GM12878 (cell line): ENCODE measurements at regions of chr7 and their contacts with region 1.

Region 1: GRCh38 chr7:992709-993607 is 10.0 kb downstream of the CYP2W1 start:
- DNase-seq: peak; percentile 72
- ATAC-seq: peak; percentile 97
- H3K4me3 ChIP-seq: no peak overlapping the region
- H3K27ac ChIP-seq: no peak overlapping the region
- H3K4me1 ChIP-seq: peaks cover 6% of the 10 kb centered on the region
- H3K27me3 ChIP-seq: no peaks in the 10 kb centered on the region
- CTCF ChIP-seq: peak; percentile 99 to 100 (median 100); a peak in 5 of 6 replicates
- EP300 ChIP-seq: no peak
- POLR2A ChIP-seq: peak; percentile 71
- RAD21 ChIP-seq: peak; percentile 98

Region 2: DNA sequence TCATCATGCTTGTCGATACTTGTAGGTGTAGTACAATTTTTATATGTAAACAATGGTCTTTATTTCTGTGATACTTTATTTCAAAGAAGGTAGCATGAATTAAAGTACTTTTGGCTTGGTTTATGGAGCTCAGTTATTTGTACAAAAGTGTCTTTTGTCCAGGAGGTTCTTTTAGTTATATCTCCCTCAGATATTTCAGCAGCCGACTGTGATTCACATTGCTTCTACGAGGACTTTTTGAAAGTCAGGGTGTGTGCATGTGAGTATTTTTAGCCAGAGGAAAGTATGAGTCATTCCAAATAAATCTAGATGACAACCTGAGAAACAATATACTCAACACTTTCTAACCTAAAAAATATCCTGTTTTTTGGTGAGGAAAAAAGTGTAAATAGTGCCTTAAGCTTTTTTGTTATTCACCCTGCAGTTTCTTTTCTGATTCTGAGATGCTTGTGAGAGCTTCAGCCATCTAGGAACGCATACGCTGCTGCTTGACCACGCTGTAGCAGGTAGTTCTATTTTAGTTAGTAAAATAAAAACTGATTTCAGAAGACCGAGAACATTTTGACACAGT is 161.3 kb before region 1 on chr7:
- CTCF ChIA-PET with region 1: no interaction called
- POLR2A ChIA-PET with region 1: no interaction called
- RAD21 ChIA-PET with region 1: no interaction called
- SMC1A ChIA-PET with region 1: no interaction called
- in situ Hi-C with region 1: no loop called
- intact Hi-C with region 1: no loop called
- DNase-seq: peak; percentile 64
- ATAC-seq: peak; percentile 87
- H3K4me3 ChIP-seq: peak overlapping the region; percentile 31
- H3K27ac ChIP-seq: peak overlapping the region; percentile 77
- H3K4me1 ChIP-seq: peaks cover 27% of the 10 kb centered on the region
- H3K27me3 ChIP-seq: no peaks in the 10 kb centered on the region
- CTCF ChIP-seq: no peak
- EP300 ChIP-seq: peak; percentile 57 to 82; a peak in 3 of 4 replicates
- POLR2A ChIP-seq: no peak
- RAD21 ChIP-seq: 0 out of 2 replicates have a peak, but pooled peaks have one; percentile 18

Region 3: DNA sequence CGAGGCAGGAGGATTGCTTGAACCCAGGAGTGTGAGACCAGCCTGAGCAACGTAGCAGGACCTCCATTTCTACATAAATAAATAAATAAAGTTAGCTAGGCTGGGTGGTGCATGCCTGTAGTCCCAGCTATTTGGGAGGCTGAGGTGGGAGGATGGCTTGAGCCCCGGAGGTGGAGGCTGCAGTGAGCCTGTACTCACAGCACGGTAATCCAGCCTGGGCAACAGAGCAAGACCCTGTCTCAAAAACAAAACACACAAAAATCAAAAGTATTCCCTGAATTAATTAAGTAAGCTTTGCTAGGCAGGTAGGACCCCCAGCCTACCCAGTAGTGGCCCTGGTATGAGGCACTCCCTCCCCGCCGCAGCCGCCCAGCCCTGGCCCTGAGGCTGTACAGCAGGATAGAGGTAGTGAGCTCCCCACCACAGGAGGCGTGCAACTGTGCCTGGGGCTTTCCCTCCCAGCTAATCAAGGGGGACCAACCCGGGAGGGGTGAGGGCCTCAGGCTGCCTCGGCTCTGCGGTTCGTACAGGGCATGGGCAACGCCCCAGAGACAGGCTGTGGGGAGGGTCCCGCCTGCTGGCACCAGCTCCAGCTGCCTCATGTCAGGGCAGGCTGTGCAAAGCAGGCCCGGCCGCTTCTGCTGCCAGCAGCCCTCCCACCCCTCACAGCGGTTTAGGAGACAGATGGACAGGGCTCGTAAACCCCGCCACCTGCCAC is 11.0 kb before region 1 on chr7:
- CTCF ChIA-PET with region 1: interaction called, 78 read pairs
- POLR2A ChIA-PET with region 1: interaction called, 14 read pairs
- RAD21 ChIA-PET with region 1: interaction called, 30 read pairs
- SMC1A ChIA-PET with region 1: interaction called, 21 read pairs
- in situ Hi-C with region 1: no loop called
- intact Hi-C with region 1: no loop called
- DNase-seq: no peak
- ATAC-seq: no peak
- H3K4me3 ChIP-seq: no peak overlapping the region
- H3K27ac ChIP-seq: no peak overlapping the region
- H3K4me1 ChIP-seq: no peaks in the 10 kb centered on the region
- H3K27me3 ChIP-seq: no peaks in the 10 kb centered on the region; a peak in 2 of 4 replicates
- CTCF ChIP-seq: no peak
- EP300 ChIP-seq: no peak
- POLR2A ChIP-seq: no peak
- RAD21 ChIP-seq: no peak

Region 4: GRCh38 chr7:1059200-1060091 is 66.5 kb after region 1 on chr7:
- CTCF ChIA-PET with region 1: interaction called, 280 read pairs
- POLR2A ChIA-PET with region 1: interaction called, 7 read pairs
- RAD21 ChIA-PET with region 1: interaction called, 196 read pairs
- SMC1A ChIA-PET with region 1: interaction called, 121 read pairs
- in situ Hi-C with region 1: loop called (anchors 5 kb)
- intact Hi-C with region 1: no loop called
- DNase-seq: peak; percentile 33
- ATAC-seq: peak; percentile 69
- H3K4me3 ChIP-seq: no peak overlapping the region
- H3K27ac ChIP-seq: no peak overlapping the region
- H3K4me1 ChIP-seq: peaks cover 33% of the 10 kb centered on the region
- H3K27me3 ChIP-seq: no peaks in the 10 kb centered on the region
- CTCF ChIP-seq: no peak
- EP300 ChIP-seq: no peak
- POLR2A ChIP-seq: no peak
- RAD21 ChIP-seq: no peak

Region 5: GRCh38 chr7:1086588-1087464 is 93.9 kb after region 1 on chr7:
- CTCF ChIA-PET with region 1: interaction called, 27 read pairs
- POLR2A ChIA-PET with region 1: interaction called, 3 read pairs
- RAD21 ChIA-PET with region 1: interaction called, 18 read pairs
- SMC1A ChIA-PET with region 1: interaction called, 28 read pairs
- in situ Hi-C with region 1: no loop called
- intact Hi-C with region 1: loop called (anchors 5 kb)
- DNase-seq: no peak
- ATAC-seq: peak; percentile 96
- H3K4me3 ChIP-seq: peak overlapping the region; percentile 43; the same call in 1 of the 2 replicates
- H3K27ac ChIP-seq: peak overlapping the region; percentile 76
- H3K4me1 ChIP-seq: peaks cover 12% of the 10 kb centered on the region
- H3K27me3 ChIP-seq: no peaks in the 10 kb centered on the region
- CTCF ChIP-seq: peak; percentile 73 to 81 (median 78)
- EP300 ChIP-seq: peak; percentile 64 to 72
- POLR2A ChIP-seq: peak; percentile 70
- RAD21 ChIP-seq: peak; percentile 57; the same call in 1 of the 2 replicates

Region 6: DNA sequence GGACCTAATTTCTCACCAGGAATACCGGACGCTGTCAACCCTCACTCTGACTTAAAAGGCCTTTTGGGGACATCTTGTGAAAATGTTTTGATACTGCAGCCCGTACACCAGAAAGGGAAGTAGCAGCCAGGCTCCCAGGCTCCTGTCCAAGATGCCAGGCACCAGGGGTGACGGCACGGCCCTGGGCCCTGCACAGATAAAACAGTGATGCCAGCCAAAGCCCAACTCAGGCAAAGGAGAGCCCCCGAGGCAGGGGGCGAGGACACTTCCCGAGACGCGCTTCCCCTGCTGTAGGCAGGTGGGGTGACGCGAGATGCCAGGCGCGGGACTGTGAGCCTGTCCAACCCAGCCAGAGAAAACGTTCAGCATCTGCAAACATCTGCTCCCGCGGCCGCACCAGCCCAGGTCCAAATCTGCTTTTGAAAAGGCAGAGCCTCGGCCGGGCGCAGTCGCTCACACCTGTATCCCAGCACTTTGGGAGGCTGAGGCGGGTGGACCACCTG is 151.4 kb after region 1 on chr7:
- CTCF ChIA-PET with region 1: interaction called, 39 read pairs
- POLR2A ChIA-PET with region 1: interaction called, 5 read pairs
- RAD21 ChIA-PET with region 1: interaction called, 21 read pairs
- SMC1A ChIA-PET with region 1: interaction called, 8 read pairs
- in situ Hi-C with region 1: no loop called
- intact Hi-C with region 1: no loop called
- DNase-seq: no peak
- ATAC-seq: peak; percentile 62
- H3K4me3 ChIP-seq: no peak overlapping the region
- H3K27ac ChIP-seq: no peak overlapping the region
- H3K4me1 ChIP-seq: no peaks in the 10 kb centered on the region; the same call in 1 of the 2 replicates
- H3K27me3 ChIP-seq: no peaks in the 10 kb centered on the region
- CTCF ChIP-seq: peak; percentile 15 to 53 (median 49); a peak in 5 of 6 replicates
- EP300 ChIP-seq: no peak
- POLR2A ChIP-seq: no peak
- RAD21 ChIP-seq: peak; percentile 73

Region 7: DNA sequence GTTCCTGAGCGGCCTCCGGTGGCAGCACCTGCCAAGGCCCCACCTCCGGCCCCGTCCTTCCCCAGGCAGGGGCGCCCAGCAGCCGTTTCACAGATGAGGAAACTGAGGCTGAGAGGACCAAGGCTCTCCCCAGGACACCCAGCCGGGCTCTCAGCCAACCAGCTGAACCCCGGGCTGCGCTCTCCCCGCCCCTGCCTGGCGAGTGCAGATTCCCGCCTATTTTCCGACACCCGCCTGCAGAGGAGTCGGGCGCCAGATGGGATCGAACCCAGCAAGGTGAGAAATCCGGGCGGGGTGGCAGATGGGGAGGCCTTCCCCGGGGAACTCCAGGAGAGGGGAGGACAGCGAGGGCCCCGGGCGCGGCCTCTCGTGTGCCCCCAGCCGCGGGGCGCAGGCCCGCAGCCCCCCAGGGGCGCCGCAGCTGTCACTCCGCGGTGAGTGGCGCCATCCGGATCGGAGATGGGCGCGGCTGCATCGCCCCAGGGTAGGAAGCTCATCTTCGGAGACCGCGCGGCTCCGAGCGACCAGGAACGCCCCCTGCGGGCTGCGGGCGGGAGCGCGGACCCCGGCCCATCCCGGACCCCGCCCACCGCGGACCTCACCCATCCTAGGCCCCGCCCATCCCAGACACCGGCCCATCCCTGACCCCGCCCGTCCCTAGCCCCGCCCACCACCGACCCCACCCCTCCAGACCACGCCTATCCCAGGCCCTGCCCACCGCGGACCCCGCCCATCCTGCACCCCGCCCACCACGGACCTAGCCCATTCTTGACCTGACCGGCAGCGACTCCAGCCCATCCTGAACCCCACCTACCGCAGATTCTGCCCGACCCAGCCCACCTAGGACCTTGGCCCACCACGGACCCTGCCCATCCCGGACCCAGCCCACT is 376.0 kb after region 1 on chr7:
- CTCF ChIA-PET with region 1: no interaction called
- POLR2A ChIA-PET with region 1: no interaction called
- RAD21 ChIA-PET with region 1: no interaction called
- SMC1A ChIA-PET with region 1: no interaction called
- in situ Hi-C with region 1: no loop called
- intact Hi-C with region 1: no loop called
- DNase-seq: no peak
- ATAC-seq: peak; percentile 56
- H3K4me3 ChIP-seq: no peak overlapping the region
- H3K27ac ChIP-seq: no peak overlapping the region
- H3K4me1 ChIP-seq: no peaks in the 10 kb centered on the region
- H3K27me3 ChIP-seq: 0 out of 4 replicates have a peak, but pooled peaks cover 0 to 3% of the 10 kb centered on the region in 2 experiments
- CTCF ChIP-seq: peak in 1 of 3 experiments; percentile 19; a peak in 1 of 6 replicates
- EP300 ChIP-seq: no peak
- POLR2A ChIP-seq: no peak; the same call in 1 of the 2 replicates
- RAD21 ChIP-seq: no peak